ENCODE measurements at regions of chr3 and their contacts with region 1.

Region 1: GRCh38 chr3:105366326-105367062 is at the start of gene ALCAM:
- DNase-seq: peak; percentile 95
- H3K4me3 Mint-ChIP-seq: peak within 1 kb of the TSS; percentile 94
- H3K27ac Mint-ChIP-seq: peak within 1 kb of the TSS; percentile 99
- H3K4me1 Mint-ChIP-seq: peaks cover 45% of the 10 kb centered on the region
- H3K27me3 Mint-ChIP-seq: peaks cover 25% of the 10 kb centered on the region
- total RNA-seq, gene ALCAM: 26.3 and 26.5 TPM in 2 replicates

Region 2: GRCh38 chr3:104596551-104596950 is 769.9 kb before region 1 on chr3:
- intact Hi-C with region 1: loop called (anchors 2 kb)
- DNase-seq: peak; percentile 64
- H3K4me3 Mint-ChIP-seq: no peak overlapping the region
- H3K27ac Mint-ChIP-seq: no peak overlapping the region
- H3K4me1 Mint-ChIP-seq: no peaks in the 10 kb centered on the region
- H3K27me3 Mint-ChIP-seq: no peaks in the 10 kb centered on the region

Region 3: DNA sequence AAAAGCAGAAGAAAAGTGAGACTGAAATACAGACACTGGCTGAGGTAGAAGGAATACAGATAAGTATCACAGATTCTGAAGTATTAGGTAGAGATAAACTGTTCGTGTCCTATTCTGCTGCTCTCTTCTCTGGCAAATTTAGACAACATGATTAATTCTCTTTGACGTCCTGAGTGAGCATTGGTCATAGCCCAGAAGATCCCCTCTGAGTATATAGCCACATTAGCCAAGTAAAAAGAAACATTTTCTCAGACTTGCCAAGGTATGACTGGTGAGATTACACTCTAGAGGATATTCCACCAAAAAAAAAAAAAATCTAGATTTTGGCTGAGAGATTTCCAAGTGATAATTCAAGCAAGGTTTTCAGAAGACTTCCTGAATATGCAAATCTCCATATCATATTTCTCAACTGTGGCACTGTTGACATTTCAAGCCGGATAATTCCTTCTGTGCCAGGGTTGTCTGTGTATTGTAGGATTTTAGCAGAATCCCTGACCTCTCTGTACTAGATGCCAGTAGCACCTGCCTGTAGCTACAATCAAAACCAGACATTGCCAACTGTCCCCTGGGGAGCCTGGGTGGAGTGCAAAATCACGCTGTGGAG is 111.0 kb before region 1 on chr3:
- intact Hi-C with region 1: no loop called
- DNase-seq: no peak
- H3K4me3 Mint-ChIP-seq: no peak overlapping the region
- H3K27ac Mint-ChIP-seq: no peak overlapping the region
- H3K4me1 Mint-ChIP-seq: no peaks in the 10 kb centered on the region
- H3K27me3 Mint-ChIP-seq: no peaks in the 10 kb centered on the region

Region 4: DNA sequence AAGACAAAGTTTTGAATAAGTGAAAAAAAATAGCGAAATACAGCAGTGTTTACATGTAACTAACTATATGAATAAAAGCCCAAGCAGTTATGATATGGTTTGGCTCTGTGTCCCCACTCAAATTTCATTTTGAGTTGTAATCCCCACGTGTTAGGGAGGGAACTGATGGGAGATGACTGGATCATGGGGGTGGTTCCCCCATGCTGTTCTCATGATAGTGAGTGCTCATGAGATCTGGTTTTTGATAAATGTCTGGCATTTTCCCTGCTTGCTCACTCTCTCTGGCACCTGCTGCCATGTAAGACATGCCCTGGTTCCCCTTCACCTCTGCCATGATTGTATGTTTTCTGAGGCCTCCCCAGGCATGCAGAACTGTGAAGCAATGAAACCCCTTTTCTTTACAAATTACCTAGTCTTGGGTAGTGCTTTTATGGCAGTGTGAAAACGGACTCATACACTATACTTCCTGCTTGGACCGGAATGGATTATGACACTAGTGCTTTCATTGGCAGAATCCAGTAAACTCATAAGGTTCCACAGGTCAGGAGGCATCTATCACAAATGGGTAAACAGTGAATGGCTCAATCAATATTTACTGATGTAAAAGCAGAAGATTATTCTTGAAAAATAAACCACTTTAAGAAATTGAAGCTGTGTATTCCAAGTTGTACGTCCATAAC is 310.3 kb after region 1 on chr3:
- intact Hi-C with region 1: loop called (anchors 2 kb)
- DNase-seq: peak; percentile 48
- H3K4me3 Mint-ChIP-seq: no peak overlapping the region
- H3K27ac Mint-ChIP-seq: peak overlapping the region; percentile 89
- H3K4me1 Mint-ChIP-seq: peaks cover 26% of the 10 kb centered on the region
- H3K27me3 Mint-ChIP-seq: no peaks in the 10 kb centered on the region

Region 5: DNA sequence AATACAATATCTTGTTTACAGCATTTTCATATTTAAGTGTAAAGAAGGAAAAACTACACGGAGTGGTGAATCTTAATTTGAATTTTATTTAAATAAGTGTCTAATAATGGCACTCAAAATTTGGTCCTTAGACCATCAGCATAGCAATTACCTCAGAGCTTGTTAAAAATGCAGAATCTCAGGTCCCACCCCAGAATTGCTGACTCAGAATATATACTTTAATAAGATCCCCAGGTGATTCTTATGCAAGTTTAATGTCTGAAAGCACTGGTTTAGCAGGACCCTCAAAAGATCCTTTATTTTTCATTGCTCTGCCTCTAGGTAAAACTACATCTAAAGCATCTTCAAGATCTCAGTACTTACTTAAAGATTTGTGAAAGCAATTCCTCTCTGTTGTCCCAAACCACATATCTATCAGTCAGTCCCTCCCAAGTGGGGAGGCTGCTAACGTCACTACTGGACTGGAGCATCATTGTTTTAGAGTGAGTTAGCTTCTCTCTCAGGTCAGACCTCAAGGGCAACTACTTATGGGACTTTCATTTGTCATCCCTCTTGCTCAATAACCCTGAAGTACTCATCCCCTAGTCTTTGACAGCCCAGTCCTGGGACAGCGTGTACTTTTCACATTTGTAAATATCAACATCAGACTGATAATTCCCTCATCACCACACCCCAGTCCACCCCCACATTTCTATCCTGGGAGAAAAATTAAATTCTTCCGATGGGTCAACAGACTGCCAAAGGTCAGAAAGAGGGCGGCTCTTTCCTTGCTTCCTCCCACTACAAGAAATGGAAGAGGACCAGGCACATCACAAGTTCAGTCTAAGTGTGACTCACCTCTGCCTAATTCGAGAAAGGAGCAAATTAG is 425.7 kb after region 1 on chr3:
- intact Hi-C with region 1: no loop called
- DNase-seq: no peak
- H3K4me3 Mint-ChIP-seq: no peak overlapping the region
- H3K27ac Mint-ChIP-seq: peak overlapping the region; percentile 84
- H3K4me1 Mint-ChIP-seq: peaks cover 51% of the 10 kb centered on the region
- H3K27me3 Mint-ChIP-seq: no peaks in the 10 kb centered on the region

Region 6: DNA sequence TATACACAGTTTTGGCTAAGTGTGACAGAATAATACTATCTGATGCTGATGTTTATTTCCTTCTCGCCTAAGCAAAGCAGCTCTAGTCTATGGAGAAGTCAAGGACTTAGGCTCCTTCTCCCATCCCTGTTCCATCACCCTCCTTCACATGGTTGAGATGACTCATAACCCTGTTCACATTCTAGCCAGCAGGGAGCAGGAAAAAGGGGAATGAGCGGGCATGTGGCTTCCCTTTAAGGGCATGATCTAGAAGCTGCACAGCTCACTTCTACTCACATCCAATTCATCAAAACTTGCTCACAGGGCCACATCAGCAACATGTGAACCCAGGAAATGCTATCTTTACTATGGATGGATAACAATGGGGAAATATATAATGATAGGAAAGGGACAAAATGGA is 461.5 kb after region 1 on chr3:
- intact Hi-C with region 1: loop called (anchors 5 kb)
- DNase-seq: peak; percentile 68
- H3K4me3 Mint-ChIP-seq: peak overlapping the region; percentile 60
- H3K27ac Mint-ChIP-seq: peak overlapping the region; percentile 100
- H3K4me1 Mint-ChIP-seq: peaks cover 73% of the 10 kb centered on the region
- H3K27me3 Mint-ChIP-seq: no peaks in the 10 kb centered on the region

Region 7: GRCh38 chr3:106232956-106233355 is 866.5 kb after region 1 on chr3:
- intact Hi-C with region 1: loop called (anchors 10 kb)
- DNase-seq: no peak
- H3K4me3 Mint-ChIP-seq: no peak overlapping the region
- H3K27ac Mint-ChIP-seq: no peak overlapping the region
- H3K4me1 Mint-ChIP-seq: peaks cover 42% of the 10 kb centered on the region
- H3K27me3 Mint-ChIP-seq: no peaks in the 10 kb centered on the region

Region 8: GRCh38 chr3:106609666-106610301 is 1243.3 kb after region 1 on chr3:
- intact Hi-C with region 1: loop called (anchors 10 kb)
- DNase-seq: peak; percentile 90
- H3K4me3 Mint-ChIP-seq: no peak overlapping the region
- H3K27ac Mint-ChIP-seq: peak overlapping the region; percentile 83
- H3K4me1 Mint-ChIP-seq: peaks cover 24% of the 10 kb centered on the region
- H3K27me3 Mint-ChIP-seq: no peaks in the 10 kb centered on the region

Measured in activated CD4-positive, alpha-beta T cell treated with anti-CD3 and anti-CD28 coated beads, Interleukin-2, amount 10 ng/mL, durations not matched to agents 24 days and 14 days (primary cell).